Mammary epithelial cell (primary cell): ENCODE measurements at regions of chr3 and their contacts with region 1.

Region 1: GRCh38 chr3:119588112-119588511 is 8.8 kb downstream of the ADPRH start:
- DNase-seq: no peak
- H3K4me3 ChIP-seq: no peak overlapping the region
- H3K27ac ChIP-seq: no peak overlapping the region
- H3K4me1 ChIP-seq: no peaks in the 10 kb centered on the region
- H3K27me3 ChIP-seq: peaks cover 4% of the 10 kb centered on the region
- CTCF ChIP-seq: no peak

Region 2: GRCh38 chr3:119063471-119063870 is 524.6 kb before region 1 on chr3:
- CTCF ChIA-PET with region 1: no interaction called
- dilution Hi-C with region 1: no loop called
- in situ Hi-C with region 1: no loop called
- intact Hi-C with region 1: no loop called
- DNase-seq: no peak
- H3K4me3 ChIP-seq: no peak overlapping the region
- H3K27ac ChIP-seq: no peak overlapping the region
- H3K4me1 ChIP-seq: no peaks in the 10 kb centered on the region
- H3K27me3 ChIP-seq: no peaks in the 10 kb centered on the region
- CTCF ChIP-seq: no peak

Region 3: DNA sequence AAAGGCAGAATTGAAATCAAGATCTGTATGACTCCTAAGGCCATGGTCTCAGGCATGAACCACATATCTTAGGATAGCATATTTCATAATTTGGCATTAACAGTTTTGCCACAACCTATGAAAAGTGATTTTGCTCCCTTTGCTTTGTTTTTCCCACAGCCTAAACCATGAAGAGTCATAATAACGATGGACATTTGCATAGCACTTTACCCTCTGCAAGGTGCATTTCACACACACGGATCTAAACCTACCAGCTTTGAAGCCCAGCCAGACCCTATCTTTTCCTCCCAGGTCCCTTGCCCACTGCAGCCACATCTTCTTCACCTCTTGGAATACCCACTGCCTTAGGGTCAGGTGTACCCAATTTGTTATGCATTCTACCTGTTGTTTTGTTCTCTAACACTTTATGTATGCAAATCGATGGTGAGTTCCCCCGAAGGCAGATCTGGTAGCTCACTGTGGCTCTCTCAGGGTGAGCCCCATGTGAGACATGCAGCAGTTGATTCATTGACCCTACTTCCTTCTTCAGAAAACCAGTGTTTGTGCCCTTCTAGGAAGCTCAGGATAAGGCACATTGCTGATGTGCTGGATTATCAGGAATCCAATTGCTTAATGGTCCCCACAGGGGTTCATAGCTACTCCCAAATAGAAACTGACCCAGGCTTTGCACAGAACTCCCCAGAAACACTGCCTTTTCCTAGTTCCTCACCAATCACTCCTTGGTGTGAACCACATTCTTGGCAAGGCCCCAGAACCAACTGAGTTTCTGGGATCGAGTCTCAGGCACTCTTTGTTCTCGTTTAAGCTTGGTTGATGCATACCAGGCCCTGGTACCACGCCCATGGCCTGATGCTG is 285.2 kb before region 1 on chr3:
- CTCF ChIA-PET with region 1: no interaction called
- dilution Hi-C with region 1: no loop called
- in situ Hi-C with region 1: no loop called
- intact Hi-C with region 1: no loop called
- DNase-seq: no peak
- H3K4me3 ChIP-seq: no peak overlapping the region
- H3K27ac ChIP-seq: no peak overlapping the region
- H3K4me1 ChIP-seq: peaks cover 33% of the 10 kb centered on the region
- H3K27me3 ChIP-seq: no peaks in the 10 kb centered on the region
- CTCF ChIP-seq: no peak

Region 4: GRCh38 chr3:119508172-119508845 is 79.8 kb before region 1 on chr3:
- CTCF ChIA-PET with region 1: interaction called, 15 read pairs
- dilution Hi-C with region 1: no loop called
- in situ Hi-C with region 1: no loop called
- intact Hi-C with region 1: no loop called
- DNase-seq: peak; percentile 6
- H3K4me3 ChIP-seq: no peak overlapping the region
- H3K27ac ChIP-seq: no peak overlapping the region
- H3K4me1 ChIP-seq: no peaks in the 10 kb centered on the region
- H3K27me3 ChIP-seq: no peaks in the 10 kb centered on the region
- CTCF ChIP-seq: no peak